ENCODE measurements at regions of chr19 and their contacts with region 1.

Region 1: GRCh38 chr19:42764836-42765235 is 642 bp downstream of the PSG8 start:
- DNase-seq: no peak
- H3K4me3 Mint-ChIP-seq: no peak overlapping the region
- H3K27ac Mint-ChIP-seq: no peak overlapping the region
- H3K4me1 Mint-ChIP-seq: peaks cover 28% of the 10 kb centered on the region
- H3K27me3 Mint-ChIP-seq: no peaks in the 10 kb centered on the region
- CTCF ChIP-seq: no peak

Region 2: GRCh38 chr19:42563352-42564210 is 201.3 kb before region 1 on chr19:
- CTCF ChIA-PET with region 1: no interaction called
- POLR2A ChIA-PET with region 1: no interaction called
- intact Hi-C with region 1: no loop called
- DNase-seq: peak; percentile 60
- H3K4me3 Mint-ChIP-seq: no peak overlapping the region
- H3K27ac Mint-ChIP-seq: no peak overlapping the region
- H3K4me1 Mint-ChIP-seq: peaks cover 10% of the 10 kb centered on the region
- H3K27me3 Mint-ChIP-seq: peaks cover 24% of the 10 kb centered on the region
- CTCF ChIP-seq: peak; percentile 56

Region 3: DNA sequence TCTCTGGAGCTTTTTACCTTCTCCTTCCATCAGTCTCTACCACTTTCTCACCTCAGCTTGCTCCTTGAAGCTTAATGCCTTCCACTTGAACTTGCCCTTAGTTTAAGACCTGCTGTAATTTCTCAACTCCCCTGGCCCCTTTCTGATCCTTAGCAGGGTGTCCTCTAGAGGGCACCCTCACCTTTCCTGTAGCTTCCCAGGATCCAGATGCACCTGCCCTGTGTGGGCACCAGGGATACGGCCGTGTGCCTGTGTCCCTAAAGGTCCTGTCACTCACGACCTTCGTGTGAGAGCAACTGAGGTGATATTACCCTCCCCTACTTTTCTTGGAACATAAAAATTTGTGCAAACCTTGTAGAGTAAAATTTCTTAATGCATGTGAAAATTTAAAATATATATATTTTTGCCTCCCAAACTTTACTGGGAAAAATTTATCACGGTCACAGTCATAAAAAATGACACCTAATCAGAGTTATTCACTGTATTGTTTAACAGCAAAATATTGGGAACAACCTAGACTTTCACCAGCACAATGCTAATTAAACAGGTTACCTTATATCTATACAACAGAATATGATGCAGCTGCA is 71.0 kb before region 1 on chr19:
- CTCF ChIA-PET with region 1: interaction called, 10 read pairs
- POLR2A ChIA-PET with region 1: no interaction called
- intact Hi-C with region 1: no loop called
- DNase-seq: peak; percentile 73
- H3K4me3 Mint-ChIP-seq: no peak overlapping the region
- H3K27ac Mint-ChIP-seq: no peak overlapping the region
- H3K4me1 Mint-ChIP-seq: no peaks in the 10 kb centered on the region
- H3K27me3 Mint-ChIP-seq: peaks cover 80% of the 10 kb centered on the region
- CTCF ChIP-seq: peak; percentile 82